A673 (cell line): ENCODE measurements at regions of chr1 and their contacts with region 1.

Region 1: GRCh38 chr1:39098546-39099250 is 72.5 kb downstream of the NDUFS5 start:
- DNase-seq: peak; percentile 96
- H3K4me3 ChIP-seq: no peak overlapping the region
- H3K27ac ChIP-seq: no peak overlapping the region
- H3K4me1 ChIP-seq: peaks cover 14% of the 10 kb centered on the region
- H3K27me3 ChIP-seq: no peaks in the 10 kb centered on the region
- CTCF ChIP-seq: peak; percentile 83

Region 2: GRCh38 chr1:39034114-39034654 is 64.5 kb before region 1 on chr1:
- CTCF ChIA-PET with region 1: no interaction called
- POLR2A ChIA-PET with region 1: no interaction called
- intact Hi-C with region 1: loop called (anchors 10 kb)
- DNase-seq: no peak
- H3K4me3 ChIP-seq: no peak overlapping the region
- H3K27ac ChIP-seq: no peak overlapping the region
- H3K4me1 ChIP-seq: no peaks in the 10 kb centered on the region
- H3K27me3 ChIP-seq: no peaks in the 10 kb centered on the region
- CTCF ChIP-seq: no peak

Region 3: GRCh38 chr1:39196244-39197215 is 97.8 kb after region 1 on chr1:
- CTCF ChIA-PET with region 1: interaction called, 26 read pairs
- POLR2A ChIA-PET with region 1: no interaction called
- intact Hi-C with region 1: loop called (anchors 1 kb)
- DNase-seq: peak; percentile 82
- H3K4me3 ChIP-seq: no peak overlapping the region
- H3K27ac ChIP-seq: peak overlapping the region; percentile 36
- H3K4me1 ChIP-seq: peaks cover 55% of the 10 kb centered on the region
- H3K27me3 ChIP-seq: no peaks in the 10 kb centered on the region
- CTCF ChIP-seq: no peak

Region 4: GRCh38 chr1:39258146-39258924 is 159.6 kb after region 1 on chr1:
- CTCF ChIA-PET with region 1: interaction called, 25 read pairs
- POLR2A ChIA-PET with region 1: no interaction called
- intact Hi-C with region 1: loop called (anchors 1 kb)
- DNase-seq: peak; percentile 79
- H3K4me3 ChIP-seq: no peak overlapping the region
- H3K27ac ChIP-seq: no peak overlapping the region
- H3K4me1 ChIP-seq: peaks cover 18% of the 10 kb centered on the region
- H3K27me3 ChIP-seq: no peaks in the 10 kb centered on the region
- CTCF ChIP-seq: peak; percentile 80

Region 5: GRCh38 chr1:39408641-39409054 is 309.9 kb after region 1 on chr1:
- CTCF ChIA-PET with region 1: interaction called, 26 read pairs
- POLR2A ChIA-PET with region 1: no interaction called
- intact Hi-C with region 1: loop called (anchors 1 kb)
- DNase-seq: peak; percentile 99
- H3K4me3 ChIP-seq: peak overlapping the region; percentile 93
- H3K27ac ChIP-seq: peak overlapping the region; percentile 89
- H3K4me1 ChIP-seq: peaks cover 54% of the 10 kb centered on the region
- H3K27me3 ChIP-seq: no peaks in the 10 kb centered on the region
- CTCF ChIP-seq: no peak

Region 6: GRCh38 chr1:39538588-39539465 is 440.1 kb after region 1 on chr1:
- CTCF ChIA-PET with region 1: interaction called, 11 read pairs
- POLR2A ChIA-PET with region 1: no interaction called
- intact Hi-C with region 1: loop called (anchors 1 kb)
- DNase-seq: peak; percentile 74
- H3K4me3 ChIP-seq: no peak overlapping the region
- H3K27ac ChIP-seq: no peak overlapping the region
- H3K4me1 ChIP-seq: no peaks in the 10 kb centered on the region
- H3K27me3 ChIP-seq: no peaks in the 10 kb centered on the region
- CTCF ChIP-seq: peak; percentile 92

Region 7: DNA sequence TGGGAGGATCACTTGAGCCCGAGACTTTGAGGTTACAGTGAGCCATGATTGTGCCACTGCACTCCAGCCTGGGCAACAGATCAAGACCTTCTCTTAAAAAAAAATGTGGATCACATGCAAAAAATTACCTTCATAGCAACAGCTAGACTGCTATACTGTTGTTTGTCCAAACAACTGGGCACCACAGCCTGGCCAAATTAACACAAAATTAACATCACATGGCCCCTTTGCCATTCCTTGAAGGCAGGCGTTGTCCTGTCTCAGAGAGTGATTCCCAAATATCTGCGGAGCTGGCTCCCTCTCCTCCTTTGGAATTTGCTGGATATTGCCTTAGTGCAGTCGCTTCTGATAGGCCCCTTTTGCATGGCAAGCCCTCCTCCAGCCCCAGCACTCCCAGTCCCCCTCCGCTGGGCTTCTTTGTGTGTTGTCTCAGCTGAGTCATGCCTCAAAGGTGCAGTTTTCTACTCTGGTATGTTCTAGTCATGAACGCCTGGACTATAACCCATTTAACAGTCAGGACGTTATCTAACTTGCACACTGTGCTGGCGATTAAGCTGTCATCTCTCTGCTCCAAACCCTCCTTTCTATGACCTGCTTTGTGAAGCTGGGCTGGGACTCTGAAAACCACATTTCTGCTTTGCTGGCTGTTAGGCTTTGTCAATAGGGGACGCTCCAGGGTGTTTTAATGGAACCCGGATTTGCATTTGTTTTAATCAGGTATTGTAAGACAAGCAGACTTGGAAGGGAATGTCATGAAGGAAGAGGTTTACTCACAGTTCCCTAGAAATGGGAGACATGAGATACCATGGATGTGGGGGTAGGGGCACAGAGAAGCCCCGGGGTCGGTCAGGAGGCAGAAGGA is 612.6 kb after region 1 on chr1:
- CTCF ChIA-PET with region 1: no interaction called
- POLR2A ChIA-PET with region 1: no interaction called
- intact Hi-C with region 1: loop called (anchors 10 kb)
- DNase-seq: no peak
- H3K4me3 ChIP-seq: no peak overlapping the region
- H3K27ac ChIP-seq: no peak overlapping the region
- H3K4me1 ChIP-seq: no peaks in the 10 kb centered on the region
- H3K27me3 ChIP-seq: no peaks in the 10 kb centered on the region
- CTCF ChIP-seq: no peak